Ascending aorta (tissue), 2 donors: ENCODE measurements at regions of chr7 and their contacts with region 1.

Region 1: GRCh38 chr7:45985902-45986301 is 64.8 kb upstream of the IGFBP3 start:
- DNase-seq: no peak
- H3K4me3 ChIP-seq: no peak overlapping the region
- H3K27ac ChIP-seq: no peak overlapping the region
- H3K4me1 ChIP-seq: peaks cover 10 to 30% of the 10 kb centered on the region in 2 donors
- H3K27me3 ChIP-seq: no peaks in the 10 kb centered on the region
- CTCF ChIP-seq: no peak

Region 2: DNA sequence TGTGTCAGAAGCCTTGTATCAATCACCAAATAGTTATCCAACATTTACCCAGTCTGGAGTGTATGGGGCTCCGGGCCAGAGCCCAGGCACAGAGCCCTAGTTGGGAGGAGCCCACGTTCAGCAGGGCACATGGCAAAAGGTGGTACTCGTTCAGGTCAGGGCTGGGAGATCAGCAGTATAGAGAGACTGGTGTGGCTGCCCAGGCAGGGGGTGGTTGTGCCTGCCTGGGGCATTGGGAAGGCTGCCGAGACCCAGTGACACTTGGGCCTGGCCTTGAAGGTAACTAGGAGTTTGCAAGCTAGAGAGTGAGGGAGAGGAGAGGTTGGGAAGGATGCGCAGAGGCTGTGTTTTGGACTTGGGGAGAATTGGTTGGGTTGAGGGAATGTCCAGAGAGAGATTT is 16.0 kb before region 1 on chr7:
- intact Hi-C with region 1: loop called (anchors 2 kb)
- DNase-seq: no peak
- H3K4me3 ChIP-seq: no peak overlapping the region
- H3K27ac ChIP-seq: peak overlapping the region; percentile 61 to 79
- H3K4me1 ChIP-seq: peaks cover 0 to 13% of the 10 kb centered on the region in 2 donors
- H3K27me3 ChIP-seq: no peaks in the 10 kb centered on the region
- CTCF ChIP-seq: no peak